HCT116 (cell line): ENCODE measurements at regions of chr4 and their contacts with region 1.

Region 1: DNA sequence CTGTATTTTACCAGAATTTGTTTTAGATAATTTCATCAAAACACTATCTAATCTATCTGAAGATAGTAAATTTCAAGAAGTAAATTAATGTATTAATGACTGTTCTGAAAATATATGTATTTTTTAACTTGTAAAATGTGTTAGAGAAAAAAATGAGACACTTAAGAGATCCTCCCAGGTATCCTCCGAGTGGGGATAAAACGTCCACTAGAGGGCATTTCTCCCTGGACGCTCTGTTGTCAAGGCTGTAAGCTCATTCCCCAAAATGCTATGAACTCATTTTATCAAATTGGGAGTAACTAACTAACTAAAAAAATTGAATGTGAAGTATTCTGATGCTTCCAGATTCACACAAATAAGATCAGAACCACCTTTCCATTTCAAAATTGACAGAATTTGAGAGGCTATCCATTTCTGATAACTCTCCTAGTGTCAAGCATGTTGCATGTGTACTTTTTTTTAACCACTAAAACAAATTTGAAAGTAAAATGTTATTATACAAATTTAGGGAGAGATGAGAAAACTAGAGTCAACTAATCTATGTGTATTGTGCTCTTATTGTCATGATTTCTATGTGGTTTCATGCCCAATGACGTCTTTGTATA is 337.3 kb upstream of the HS3ST1 start:
- DNase-seq: peak; percentile 57
- ATAC-seq: peak; percentile 89
- H3K4me3 ChIP-seq: no peak overlapping the region
- H3K27ac ChIP-seq: no peak overlapping the region
- H3K4me1 ChIP-seq: no peaks in the 10 kb centered on the region
- H3K27me3 ChIP-seq: no peaks in the 10 kb centered on the region
- CTCF ChIP-seq: peak; percentile 37 to 84 (median 77); a peak in 5 of 6 replicates
- POLR2A ChIP-seq: no peak
- RAD21 ChIP-seq: peak; percentile 49

Region 2: GRCh38 chr4:11748164-11748872 is 17.6 kb before region 1 on chr4:
- CTCF ChIA-PET with region 1: interaction called, 12 read pairs
- POLR2A ChIA-PET with region 1: no interaction called
- RAD21 ChIA-PET with region 1: no interaction called
- intact Hi-C with region 1: no loop called
- DNase-seq: peak; percentile 83
- ATAC-seq: peak; percentile 95
- H3K4me3 ChIP-seq: peak overlapping the region; percentile 6 to 43
- H3K27ac ChIP-seq: peak overlapping the region; percentile 88
- H3K4me1 ChIP-seq: peaks cover 31 to 50% of the 10 kb centered on the region in 2 experiments
- H3K27me3 ChIP-seq: no peaks in the 10 kb centered on the region
- CTCF ChIP-seq: no peak
- POLR2A ChIP-seq: no peak
- RAD21 ChIP-seq: peak; percentile 7; the same call in 1 of the 2 replicates

Region 3: GRCh38 chr4:11954093-11954492 is 188.1 kb after region 1 on chr4:
- CTCF ChIA-PET with region 1: no interaction called
- POLR2A ChIA-PET with region 1: no interaction called
- RAD21 ChIA-PET with region 1: no interaction called
- intact Hi-C with region 1: loop called (anchors 5 kb)
- DNase-seq: peak; percentile 44
- ATAC-seq: peak; percentile 72
- H3K4me3 ChIP-seq: no peak overlapping the region
- H3K27ac ChIP-seq: no peak overlapping the region
- H3K4me1 ChIP-seq: peaks cover 0 to 10% of the 10 kb centered on the region in 2 experiments; a peak in 2 of 4 replicates
- H3K27me3 ChIP-seq: no peaks in the 10 kb centered on the region
- CTCF ChIP-seq: peak; percentile 56 to 71 (median 71); a peak in 5 of 6 replicates
- POLR2A ChIP-seq: no peak
- RAD21 ChIP-seq: peak; percentile 74

Region 4: GRCh38 chr4:12633053-12633651 is 867.2 kb after region 1 on chr4:
- CTCF ChIA-PET with region 1: no interaction called
- POLR2A ChIA-PET with region 1: no interaction called
- RAD21 ChIA-PET with region 1: interaction called in 1 of 2 experiments, 3 read pairs
- intact Hi-C with region 1: loop called (anchors 10 kb)
- DNase-seq: peak; percentile 79
- ATAC-seq: peak; percentile 100
- H3K4me3 ChIP-seq: no peak overlapping the region
- H3K27ac ChIP-seq: no peak overlapping the region
- H3K4me1 ChIP-seq: 0 out of 4 replicates have a peak, but pooled peaks cover 0 to 5% of the 10 kb centered on the region in 2 experiments
- H3K27me3 ChIP-seq: no peaks in the 10 kb centered on the region
- CTCF ChIP-seq: peak; percentile 66 to 91 (median 87)
- POLR2A ChIP-seq: no peak
- RAD21 ChIP-seq: peak; percentile 95